BJ (cell line): ENCODE measurements at regions of chr3 and their contacts with region 1.

Region 1: GRCh38 chr3:185659942-185660921 is 74.1 kb downstream of the SENP2 start:
- DNase-seq: no peak
- H3K4me3 ChIP-seq: no peak overlapping the region
- H3K27me3 ChIP-seq: no peaks in the 10 kb centered on the region
- CTCF ChIP-seq: peak; percentile 99

Region 2: GRCh38 chr3:185308126-185308754 is 352.0 kb before region 1 on chr3:
- CTCF ChIA-PET with region 1: no interaction called
- POLR2A ChIA-PET with region 1: no interaction called
- DNase-seq: no peak
- H3K4me3 ChIP-seq: no peak overlapping the region
- H3K27me3 ChIP-seq: no peaks in the 10 kb centered on the region
- CTCF ChIP-seq: peak; percentile 89

Region 3: GRCh38 chr3:185733980-185734724 is 73.9 kb after region 1 on chr3:
- CTCF ChIA-PET with region 1: interaction called, 13 read pairs
- POLR2A ChIA-PET with region 1: interaction called, 3 read pairs
- DNase-seq: no peak
- H3K4me3 ChIP-seq: no peak overlapping the region
- H3K27me3 ChIP-seq: no peaks in the 10 kb centered on the region
- CTCF ChIP-seq: peak; percentile 70

Region 4: DNA sequence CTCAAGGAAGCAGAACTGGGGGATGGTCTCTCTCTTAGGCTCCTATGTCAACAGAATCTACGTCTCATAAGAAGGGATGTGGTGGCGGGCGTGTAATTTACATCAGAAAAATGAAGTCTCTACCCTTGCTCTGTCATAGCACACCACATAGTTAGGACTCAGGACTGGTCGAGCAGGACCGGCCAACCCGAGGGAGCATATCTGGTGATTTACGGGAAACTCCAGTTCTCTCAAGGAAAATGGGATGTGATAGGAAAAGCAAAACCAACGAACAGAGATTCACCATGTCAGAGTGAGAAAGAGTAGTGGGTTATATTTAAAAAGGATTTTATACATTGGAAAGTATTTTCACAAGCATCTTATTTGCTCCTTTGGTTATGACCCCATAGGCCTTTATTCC is 109.9 kb after region 1 on chr3:
- CTCF ChIA-PET with region 1: interaction called, 22 read pairs
- POLR2A ChIA-PET with region 1: no interaction called
- DNase-seq: no peak
- H3K4me3 ChIP-seq: no peak overlapping the region
- H3K27me3 ChIP-seq: no peaks in the 10 kb centered on the region
- CTCF ChIP-seq: no peak

Region 5: DNA sequence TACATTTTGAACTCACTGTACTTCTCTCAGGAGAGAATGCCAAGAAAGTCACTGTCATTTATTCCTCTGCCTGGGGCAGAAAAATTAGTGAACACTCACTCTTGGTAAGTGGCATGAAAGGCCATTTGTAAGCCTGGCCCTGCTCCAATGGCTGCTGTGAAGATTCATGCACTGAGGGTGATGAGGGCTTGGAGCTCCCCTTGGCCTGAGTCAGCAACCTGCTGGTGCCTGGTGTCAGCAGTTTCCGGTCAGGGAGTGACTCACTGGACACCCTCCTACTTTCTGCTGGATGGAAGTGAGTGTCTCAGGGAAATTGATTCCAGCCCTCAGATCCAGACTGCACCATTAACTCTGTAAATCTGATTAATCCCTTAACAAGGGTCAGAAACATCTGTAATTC is 240.0 kb after region 1 on chr3:
- CTCF ChIA-PET with region 1: interaction called, 16 read pairs
- POLR2A ChIA-PET with region 1: no interaction called
- DNase-seq: peak; percentile 78
- H3K4me3 ChIP-seq: no peak overlapping the region
- H3K27me3 ChIP-seq: no peaks in the 10 kb centered on the region
- CTCF ChIP-seq: no peak

Region 6: GRCh38 chr3:185924375-185924774 is 264.1 kb after region 1 on chr3:
- CTCF ChIA-PET with region 1: interaction called, 11 read pairs
- POLR2A ChIA-PET with region 1: no interaction called
- DNase-seq: no peak
- H3K4me3 ChIP-seq: no peak overlapping the region
- H3K27me3 ChIP-seq: no peaks in the 10 kb centered on the region
- CTCF ChIP-seq: no peak